Heart right ventricle (tissue), 16 donors: ENCODE measurements at regions of chr18 and their contacts with region 1.

Region 1: GRCh38 chr18:56083097-56083521 is 495.1 kb upstream of the TCF4 start:
- DNase-seq: peak; percentile 70 to 92
- ATAC-seq: peak; percentile 75 to 94 (median 89)
- H3K4me3 ChIP-seq: no peak overlapping the region
- H3K27ac ChIP-seq: peak overlapping the region; percentile 10 to 78 (median 60)
- H3K4me1 ChIP-seq: peaks cover 8 to 41% (median 32%) of the 10 kb centered on the region in 9 donors
- H3K27me3 ChIP-seq: no peaks in the 10 kb centered on the region
- CTCF ChIP-seq: peak in 6 of 9 donors; percentile 19 to 54 (median 34)

Region 2: DNA sequence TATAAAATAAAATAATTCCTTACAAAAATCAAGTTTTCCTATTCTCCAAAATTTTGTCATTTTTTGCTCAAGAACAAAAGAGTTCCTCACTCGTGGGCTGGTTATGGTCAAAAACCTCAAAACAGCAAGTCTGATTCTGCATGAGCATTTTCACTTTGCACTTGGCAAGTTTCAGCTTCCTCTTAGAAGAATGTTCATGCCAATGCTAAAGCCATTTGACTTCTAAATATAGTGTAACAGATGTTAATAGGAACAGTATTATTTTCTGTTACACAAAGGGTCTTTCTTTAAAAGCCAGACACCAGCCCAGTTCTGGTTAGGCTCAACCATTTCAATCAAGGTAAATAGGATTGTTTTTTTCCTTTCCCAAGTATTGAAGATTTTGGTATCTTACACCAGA is 862.6 kb before region 1 on chr18:
- intact Hi-C with region 1: loop called in 1 of 10 experiments (anchors 10 kb)
- DNase-seq: no peak
- ATAC-seq: peak in 6 of 8 donors; percentile 52 to 79 (median 66)
- H3K4me3 ChIP-seq: no peak overlapping the region
- H3K27ac ChIP-seq: peak overlapping the region in 5 of 10 donors; percentile 10 to 74 (median 45)
- H3K4me1 ChIP-seq: peaks cover 0 to 31% (median 12%) of the 10 kb centered on the region in 9 donors
- H3K27me3 ChIP-seq: no peaks in the 10 kb centered on the region
- CTCF ChIP-seq: no peak

Region 3: GRCh38 chr18:55869556-55870501 is 213.3 kb before region 1 on chr18:
- intact Hi-C with region 1: loop called in 1 of 10 experiments (anchors 2 kb)
- DNase-seq: peak in 1 of 2 donors; percentile 24
- ATAC-seq: peak in 7 of 8 donors; percentile 84 to 90 (median 87)
- H3K4me3 ChIP-seq: peak overlapping the region in 1 of 10 donors; percentile 5
- H3K27ac ChIP-seq: peak overlapping the region in 8 of 10 donors; percentile 7 to 66 (median 52)
- H3K4me1 ChIP-seq: peaks cover 0 to 51% (median 20%) of the 10 kb centered on the region in 9 donors
- H3K27me3 ChIP-seq: no peaks in the 10 kb centered on the region
- CTCF ChIP-seq: no peak

Region 4: GRCh38 chr18:55982992-55983391 is 100.1 kb before region 1 on chr18:
- intact Hi-C with region 1: loop called in 2 of 10 experiments (anchors 5 kb)
- DNase-seq: peak in 1 of 2 donors; percentile 6
- ATAC-seq: peak in 7 of 8 donors; percentile 32 to 72 (median 54)
- H3K4me3 ChIP-seq: peak overlapping the region in 2 of 10 donors; percentile 3 to 6
- H3K27ac ChIP-seq: peak overlapping the region; percentile 15 to 83 (median 68)
- H3K4me1 ChIP-seq: peaks cover 0 to 18% (median 9%) of the 10 kb centered on the region in 9 donors
- H3K27me3 ChIP-seq: no peaks in the 10 kb centered on the region
- CTCF ChIP-seq: no peak

Region 5: GRCh38 chr18:55988537-55988936 is 94.6 kb before region 1 on chr18:
- intact Hi-C with region 1: loop called in 2 of 10 experiments (anchors 5 kb)
- DNase-seq: peak in 1 of 2 donors; percentile 71
- ATAC-seq: peak; percentile 86 to 98 (median 94)
- H3K4me3 ChIP-seq: no peak overlapping the region
- H3K27ac ChIP-seq: peak overlapping the region in 9 of 10 donors; percentile 12 to 88 (median 63)
- H3K4me1 ChIP-seq: peaks cover 0 to 14% (median 5%) of the 10 kb centered on the region in 9 donors
- H3K27me3 ChIP-seq: no peaks in the 10 kb centered on the region
- CTCF ChIP-seq: no peak

Region 6: GRCh38 chr18:56173542-56174220 is 90.6 kb after region 1 on chr18:
- intact Hi-C with region 1: no loop called
- DNase-seq: no peak
- ATAC-seq: no peak
- H3K4me3 ChIP-seq: no peak overlapping the region
- H3K27ac ChIP-seq: no peak overlapping the region
- H3K4me1 ChIP-seq: peaks cover 0 to under 1% (median 0%) of the 10 kb centered on the region in 9 donors
- H3K27me3 ChIP-seq: no peaks in the 10 kb centered on the region
- CTCF ChIP-seq: no peak

Region 7: GRCh38 chr18:56200381-56200911 is 117.3 kb after region 1 on chr18:
- intact Hi-C with region 1: loop called in 1 of 10 experiments (anchors 5 kb)
- DNase-seq: no peak
- ATAC-seq: peak in 6 of 8 donors; percentile 6 to 50 (median 44)
- H3K4me3 ChIP-seq: no peak overlapping the region
- H3K27ac ChIP-seq: peak overlapping the region; percentile 9 to 81 (median 63)
- H3K4me1 ChIP-seq: peaks cover 0 to 62% (median 35%) of the 10 kb centered on the region in 9 donors
- H3K27me3 ChIP-seq: no peaks in the 10 kb centered on the region
- CTCF ChIP-seq: no peak